ENCODE measurements at regions of chr1 and their contacts with region 1.

Region 1: GRCh38 chr1:43529206-43529731 is 1.4 kb upstream of the PTPRF start:
- DNase-seq: peak; percentile 65
- ATAC-seq: peak; percentile 70
- H3K4me3 Mint-ChIP-seq: peak overlapping the region; percentile 50
- H3K27ac Mint-ChIP-seq: no peak overlapping the region
- H3K4me1 Mint-ChIP-seq: peaks cover 12% of the 10 kb centered on the region
- H3K27me3 Mint-ChIP-seq: peaks cover 42% of the 10 kb centered on the region
- CTCF ChIP-seq: peak; percentile 87

Region 2: DNA sequence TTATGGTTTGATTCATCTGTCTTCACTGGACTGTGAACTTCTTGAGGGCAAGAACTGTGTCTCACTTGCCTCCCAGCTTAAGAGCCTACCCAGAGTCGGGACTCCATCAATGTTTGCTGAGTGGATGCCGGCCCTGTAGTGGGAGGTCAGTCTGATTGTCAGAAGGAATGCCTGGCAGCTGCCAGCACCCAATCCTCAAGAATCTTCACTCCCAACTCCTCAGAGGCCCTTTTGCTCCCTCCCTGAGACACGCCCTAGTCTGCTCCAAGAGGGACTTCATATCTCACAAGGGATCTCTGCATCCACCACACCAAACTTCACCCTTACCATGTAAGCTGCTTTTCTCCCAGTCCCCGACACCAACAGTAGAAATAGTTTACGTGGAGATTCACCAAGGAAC is 105.5 kb after region 1 on chr1:
- CTCF ChIA-PET with region 1: no interaction called
- POLR2A ChIA-PET with region 1: no interaction called
- intact Hi-C with region 1: no loop called
- DNase-seq: no peak
- ATAC-seq: no peak
- H3K4me3 Mint-ChIP-seq: no peak overlapping the region
- H3K27ac Mint-ChIP-seq: no peak overlapping the region
- H3K4me1 Mint-ChIP-seq: no peaks in the 10 kb centered on the region
- H3K27me3 Mint-ChIP-seq: peaks cover 2% of the 10 kb centered on the region
- CTCF ChIP-seq: no peak

Region 3: GRCh38 chr1:43650310-43651085 is 121.2 kb after region 1 on chr1:
- CTCF ChIA-PET with region 1: no interaction called
- POLR2A ChIA-PET with region 1: interaction called, 5 read pairs
- intact Hi-C with region 1: loop called (anchors 5 kb)
- DNase-seq: peak; percentile 82
- ATAC-seq: peak; percentile 75
- H3K4me3 Mint-ChIP-seq: peak overlapping the region; percentile 98
- H3K27ac Mint-ChIP-seq: peak overlapping the region; percentile 97
- H3K4me1 Mint-ChIP-seq: peaks cover 46% of the 10 kb centered on the region
- H3K27me3 Mint-ChIP-seq: peaks cover 2% of the 10 kb centered on the region
- CTCF ChIP-seq: no peak

Region 4: GRCh38 chr1:43763497-43763973 is 234.3 kb after region 1 on chr1:
- CTCF ChIA-PET with region 1: interaction called, 3 read pairs
- POLR2A ChIA-PET with region 1: no interaction called
- intact Hi-C with region 1: loop called (anchors 1 kb)
- DNase-seq: peak; percentile 18
- ATAC-seq: peak; percentile 70
- H3K4me3 Mint-ChIP-seq: no peak overlapping the region
- H3K27ac Mint-ChIP-seq: no peak overlapping the region
- H3K4me1 Mint-ChIP-seq: peaks cover 3% of the 10 kb centered on the region
- H3K27me3 Mint-ChIP-seq: no peaks in the 10 kb centered on the region
- CTCF ChIP-seq: peak; percentile 36

Region 5: DNA sequence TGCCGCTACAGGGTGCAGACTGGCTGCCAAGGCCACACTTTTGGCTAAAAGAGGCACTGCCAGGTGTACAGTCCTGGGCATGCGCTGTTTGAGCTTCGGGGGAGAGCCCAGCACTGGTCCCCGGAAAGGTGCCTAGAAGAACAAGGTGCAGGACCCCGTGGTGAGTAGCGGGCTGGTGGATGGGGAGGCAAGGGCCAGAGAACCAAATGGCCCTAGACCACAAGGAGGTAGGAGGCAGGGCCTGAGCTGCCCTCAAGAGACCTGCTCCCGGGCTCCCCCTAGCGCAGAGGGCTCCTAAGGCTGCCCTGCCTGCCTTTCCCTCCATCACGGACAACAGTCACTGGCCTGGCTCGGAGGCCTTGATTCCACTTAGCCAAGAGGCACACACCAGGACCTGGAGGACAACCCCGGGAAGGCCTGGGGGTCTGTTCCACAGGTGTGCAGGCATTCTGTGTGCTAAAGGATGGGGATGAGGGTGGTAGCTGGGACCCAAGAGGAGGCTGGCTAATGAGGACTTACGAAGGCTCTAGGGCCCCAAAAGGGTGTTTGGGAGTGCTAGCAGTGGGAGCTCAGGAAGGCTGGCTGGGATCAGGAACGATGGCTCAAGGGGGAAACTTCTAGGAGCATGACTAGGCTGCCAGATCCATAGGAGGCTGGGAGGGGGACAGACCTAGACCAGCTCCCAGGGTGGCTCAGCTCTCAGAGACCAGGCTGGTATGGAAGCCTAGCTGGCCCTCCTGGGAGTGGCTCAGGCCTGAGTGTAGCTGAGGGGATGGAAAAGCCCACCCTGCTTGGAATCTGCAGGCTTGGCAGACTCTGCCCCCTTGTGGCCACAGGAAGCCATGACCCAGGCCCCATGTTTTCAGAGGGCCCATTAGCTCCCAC is 405.1 kb after region 1 on chr1:
- CTCF ChIA-PET with region 1: interaction called, 12 read pairs
- POLR2A ChIA-PET with region 1: no interaction called
- intact Hi-C with region 1: loop called (anchors 1 kb)
- DNase-seq: peak; percentile 37
- ATAC-seq: peak; percentile 67
- H3K4me3 Mint-ChIP-seq: peak overlapping the region; percentile 62
- H3K27ac Mint-ChIP-seq: no peak overlapping the region
- H3K4me1 Mint-ChIP-seq: peaks cover 19% of the 10 kb centered on the region
- H3K27me3 Mint-ChIP-seq: peaks cover 22% of the 10 kb centered on the region
- CTCF ChIP-seq: no peak

Region 6: DNA sequence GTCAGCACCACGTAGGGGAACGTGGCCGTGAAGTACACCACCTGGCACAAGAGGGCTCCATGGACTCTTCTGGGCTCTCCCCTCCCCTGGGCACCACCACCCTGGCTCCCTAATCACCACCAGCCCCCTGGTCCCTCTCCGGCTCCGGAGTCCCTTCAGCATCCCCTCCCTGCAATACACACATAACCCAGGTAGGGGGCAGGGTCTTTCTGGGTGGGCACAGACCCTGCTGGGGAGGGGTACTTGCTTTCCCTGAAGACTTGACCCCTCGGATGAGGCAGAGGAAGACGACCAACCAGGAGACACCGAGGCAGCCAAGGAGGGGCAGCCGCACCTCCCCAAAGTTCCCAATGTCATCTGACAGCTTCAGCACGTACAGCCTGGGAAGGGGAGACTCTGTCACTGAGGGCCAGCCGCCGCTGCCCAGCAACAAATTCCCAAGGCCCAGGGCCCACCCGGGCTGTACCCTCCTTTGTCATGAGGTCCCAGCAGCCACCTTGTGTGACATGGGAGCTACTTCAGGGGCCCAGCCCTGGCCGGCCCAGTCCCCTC is 473.4 kb after region 1 on chr1:
- CTCF ChIA-PET with region 1: no interaction called
- POLR2A ChIA-PET with region 1: no interaction called
- intact Hi-C with region 1: loop called (anchors 1 kb)
- DNase-seq: no peak
- ATAC-seq: no peak
- H3K4me3 Mint-ChIP-seq: no peak overlapping the region
- H3K27ac Mint-ChIP-seq: no peak overlapping the region
- H3K4me1 Mint-ChIP-seq: no peaks in the 10 kb centered on the region
- H3K27me3 Mint-ChIP-seq: no peaks in the 10 kb centered on the region
- CTCF ChIP-seq: no peak

Region 7: GRCh38 chr1:44036409-44037139 is 507.3 kb after region 1 on chr1:
- CTCF ChIA-PET with region 1: interaction called, 4 read pairs
- POLR2A ChIA-PET with region 1: no interaction called
- intact Hi-C with region 1: loop called (anchors 2 kb)
- DNase-seq: peak; percentile 50
- ATAC-seq: peak; percentile 92
- H3K4me3 Mint-ChIP-seq: no peak overlapping the region
- H3K27ac Mint-ChIP-seq: no peak overlapping the region
- H3K4me1 Mint-ChIP-seq: peaks cover 6% of the 10 kb centered on the region
- H3K27me3 Mint-ChIP-seq: no peaks in the 10 kb centered on the region
- CTCF ChIP-seq: no peak

Region 8: GRCh38 chr1:44049839-44050238 is 520.6 kb after region 1 on chr1:
- CTCF ChIA-PET with region 1: interaction called, 34 read pairs
- POLR2A ChIA-PET with region 1: no interaction called
- intact Hi-C with region 1: loop called (anchors 1 kb)
- DNase-seq: no peak
- ATAC-seq: no peak
- H3K4me3 Mint-ChIP-seq: no peak overlapping the region
- H3K27ac Mint-ChIP-seq: no peak overlapping the region
- H3K4me1 Mint-ChIP-seq: peaks cover 2% of the 10 kb centered on the region
- H3K27me3 Mint-ChIP-seq: peaks cover 13% of the 10 kb centered on the region
- CTCF ChIP-seq: no peak